ENCODE measurements at regions of chr14 and their contacts with region 1.

Region 1: GRCh38 chr14:92471919-92472318 is 41.7 kb upstream of the RIN3 start:
- DNase-seq: peak; percentile 76 to 85
- H3K4me3 ChIP-seq: no peak overlapping the region
- H3K4me3 Mint-ChIP-seq: no peak overlapping the region
- H3K27ac Mint-ChIP-seq: peak overlapping the region; percentile 78
- H3K4me1 ChIP-seq: peaks cover 40% of the 10 kb centered on the region
- H3K4me1 Mint-ChIP-seq: peaks cover 16% of the 10 kb centered on the region
- H3K27me3 ChIP-seq: no peaks in the 10 kb centered on the region
- H3K27me3 Mint-ChIP-seq: no peaks in the 10 kb centered on the region
- CTCF ChIP-seq: no peak

Region 2: GRCh38 chr14:92450351-92451070 is 21.4 kb before region 1 on chr14:
- CTCF ChIA-PET with region 1: no interaction called
- POLR2A ChIA-PET with region 1: no interaction called
- intact Hi-C with region 1: no loop called
- DNase-seq: no peak
- H3K4me3 ChIP-seq: no peak overlapping the region
- H3K4me3 Mint-ChIP-seq: no peak overlapping the region
- H3K27ac Mint-ChIP-seq: no peak overlapping the region
- H3K4me1 ChIP-seq: no peaks in the 10 kb centered on the region
- H3K4me1 Mint-ChIP-seq: no peaks in the 10 kb centered on the region
- H3K27me3 ChIP-seq: no peaks in the 10 kb centered on the region
- H3K27me3 Mint-ChIP-seq: no peaks in the 10 kb centered on the region
- CTCF ChIP-seq: no peak

Region 3: GRCh38 chr14:92511452-92512238 is 39.7 kb after region 1 on chr14:
- CTCF ChIA-PET with region 1: no interaction called
- POLR2A ChIA-PET with region 1: no interaction called
- intact Hi-C with region 1: loop called (anchors 1 kb)
- DNase-seq: no peak
- H3K4me3 ChIP-seq: no peak overlapping the region
- H3K4me3 Mint-ChIP-seq: no peak overlapping the region
- H3K27ac Mint-ChIP-seq: peak overlapping the region; percentile 72
- H3K4me1 ChIP-seq: peaks cover 27% of the 10 kb centered on the region; the same call in 1 of the 2 replicates
- H3K4me1 Mint-ChIP-seq: peaks cover 18% of the 10 kb centered on the region
- H3K27me3 ChIP-seq: no peaks in the 10 kb centered on the region
- H3K27me3 Mint-ChIP-seq: no peaks in the 10 kb centered on the region
- CTCF ChIP-seq: no peak

Region 4: DNA sequence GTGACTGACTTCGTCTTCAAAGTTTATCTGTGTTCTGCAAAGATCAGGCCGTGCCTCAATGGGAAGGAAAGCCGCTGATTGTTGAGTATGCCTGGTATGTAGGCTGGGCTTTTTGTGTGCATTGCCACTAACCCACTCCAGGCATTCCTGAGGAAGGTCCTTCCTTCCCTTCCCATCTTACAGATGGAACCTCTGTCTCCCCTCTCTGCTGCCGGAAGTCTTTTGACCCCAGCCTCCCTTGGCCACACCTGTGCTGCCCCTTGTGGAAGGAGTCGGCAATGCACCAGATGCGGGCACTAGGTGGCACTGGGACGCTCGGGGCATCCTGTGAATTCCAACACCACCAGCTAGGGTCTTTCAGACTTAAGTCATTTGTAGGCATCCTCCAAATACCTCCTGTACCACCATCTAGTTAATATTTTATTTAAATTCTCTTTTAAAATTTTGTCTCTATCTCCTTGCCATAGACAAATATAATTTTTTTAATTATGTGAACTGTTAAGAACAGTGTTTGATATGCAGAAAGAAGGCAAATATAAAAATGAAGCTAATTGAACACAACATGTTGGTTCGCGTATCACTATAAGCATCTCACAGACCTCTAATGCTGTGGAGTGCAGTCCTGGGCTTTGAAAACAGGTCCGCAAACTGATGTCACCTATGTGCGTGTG is 141.2 kb after region 1 on chr14:
- CTCF ChIA-PET with region 1: no interaction called
- POLR2A ChIA-PET with region 1: no interaction called
- intact Hi-C with region 1: no loop called
- DNase-seq: peak in 1 of 2 experiments; percentile 62
- H3K4me3 ChIP-seq: no peak overlapping the region
- H3K4me3 Mint-ChIP-seq: no peak overlapping the region
- H3K27ac Mint-ChIP-seq: no peak overlapping the region
- H3K4me1 ChIP-seq: no peaks in the 10 kb centered on the region
- H3K4me1 Mint-ChIP-seq: no peaks in the 10 kb centered on the region
- H3K27me3 ChIP-seq: no peaks in the 10 kb centered on the region
- H3K27me3 Mint-ChIP-seq: no peaks in the 10 kb centered on the region
- CTCF ChIP-seq: peak; percentile 57 to 85

Region 5: GRCh38 chr14:92783816-92784431 is 312.0 kb after region 1 on chr14:
- CTCF ChIA-PET with region 1: no interaction called
- POLR2A ChIA-PET with region 1: no interaction called
- intact Hi-C with region 1: no loop called
- DNase-seq: peak in 1 of 2 experiments; percentile 58
- H3K4me3 ChIP-seq: no peak overlapping the region
- H3K4me3 Mint-ChIP-seq: no peak overlapping the region
- H3K27ac Mint-ChIP-seq: no peak overlapping the region
- H3K4me1 ChIP-seq: no peaks in the 10 kb centered on the region
- H3K4me1 Mint-ChIP-seq: no peaks in the 10 kb centered on the region
- H3K27me3 ChIP-seq: no peaks in the 10 kb centered on the region
- H3K27me3 Mint-ChIP-seq: no peaks in the 10 kb centered on the region
- CTCF ChIP-seq: peak; percentile 44 to 54

Region 6: GRCh38 chr14:94161981-94162380 is 1690.1 kb after region 1 on chr14:
- CTCF ChIA-PET with region 1: no interaction called
- POLR2A ChIA-PET with region 1: no interaction called
- intact Hi-C with region 1: no loop called
- DNase-seq: no peak
- H3K4me3 ChIP-seq: no peak overlapping the region
- H3K4me3 Mint-ChIP-seq: no peak overlapping the region
- H3K27ac Mint-ChIP-seq: no peak overlapping the region
- H3K4me1 ChIP-seq: no peaks in the 10 kb centered on the region
- H3K4me1 Mint-ChIP-seq: no peaks in the 10 kb centered on the region
- H3K27me3 ChIP-seq: no peaks in the 10 kb centered on the region
- H3K27me3 Mint-ChIP-seq: peaks cover 8% of the 10 kb centered on the region
- CTCF ChIP-seq: no peak